A673 (cell line): ENCODE measurements at regions of chr7 and their contacts with region 1.

Region 1: DNA sequence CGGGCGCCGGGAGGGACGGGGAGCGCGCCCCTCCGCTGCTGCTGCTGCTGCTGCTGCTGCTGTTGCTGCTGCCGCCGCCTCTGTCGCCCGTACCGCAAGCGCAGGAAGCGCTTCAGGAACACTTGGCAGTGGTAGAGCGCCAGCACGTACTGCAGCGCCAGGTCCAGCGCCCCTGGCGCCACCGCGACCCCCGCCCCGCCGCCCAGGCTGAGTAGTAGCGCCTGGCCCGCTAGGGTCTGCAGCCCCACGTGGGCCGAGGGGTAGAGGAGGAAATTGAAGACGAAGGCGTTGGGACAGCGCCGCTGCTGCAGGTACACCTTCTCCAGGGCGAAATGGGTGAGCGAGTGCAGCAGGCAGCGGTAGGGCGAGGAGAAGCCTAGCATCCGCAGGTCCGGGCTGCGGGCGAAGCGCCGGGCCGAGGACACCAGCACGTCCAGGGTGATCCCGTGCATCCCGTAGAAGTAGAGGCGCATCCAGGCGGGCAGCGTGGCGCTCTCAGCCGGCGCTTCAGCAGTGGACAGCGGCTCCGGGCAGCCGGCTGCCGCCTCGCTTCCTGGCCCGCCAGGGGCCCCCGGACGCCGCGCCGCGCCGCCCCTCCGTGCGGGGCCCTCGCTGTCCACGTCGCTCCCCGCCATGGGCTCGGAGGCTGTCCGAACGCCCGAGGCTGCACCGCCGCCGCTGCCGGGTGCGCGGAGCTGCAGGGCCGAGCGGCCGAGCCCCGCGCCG is at the start of gene TMEM229A:
- DNase-seq: peak; percentile 78
- H3K4me3 ChIP-seq: peak within 1 kb of the TSS; percentile 77
- H3K27ac ChIP-seq: peak within 1 kb of the TSS; percentile 98
- H3K4me1 ChIP-seq: peaks cover 54% of the 10 kb centered on the region
- H3K27me3 ChIP-seq: no peaks in the 10 kb centered on the region
- CTCF ChIP-seq: 0 out of 2 replicates have a peak, but pooled peaks have one; percentile 25
- total RNA-seq, gene TMEM229A: 22.2 and 24.6 TPM in 2 replicates

Region 2: GRCh38 chr7:122975341-122975740 is 1057.2 kb before region 1 on chr7:
- CTCF ChIA-PET with region 1: no interaction called
- POLR2A ChIA-PET with region 1: no interaction called
- intact Hi-C with region 1: loop called (anchors 5 kb)
- DNase-seq: no peak
- H3K4me3 ChIP-seq: no peak overlapping the region
- H3K27ac ChIP-seq: peak overlapping the region; percentile 35
- H3K4me1 ChIP-seq: peaks cover 36% of the 10 kb centered on the region
- H3K27me3 ChIP-seq: no peaks in the 10 kb centered on the region
- CTCF ChIP-seq: no peak

Region 3: DNA sequence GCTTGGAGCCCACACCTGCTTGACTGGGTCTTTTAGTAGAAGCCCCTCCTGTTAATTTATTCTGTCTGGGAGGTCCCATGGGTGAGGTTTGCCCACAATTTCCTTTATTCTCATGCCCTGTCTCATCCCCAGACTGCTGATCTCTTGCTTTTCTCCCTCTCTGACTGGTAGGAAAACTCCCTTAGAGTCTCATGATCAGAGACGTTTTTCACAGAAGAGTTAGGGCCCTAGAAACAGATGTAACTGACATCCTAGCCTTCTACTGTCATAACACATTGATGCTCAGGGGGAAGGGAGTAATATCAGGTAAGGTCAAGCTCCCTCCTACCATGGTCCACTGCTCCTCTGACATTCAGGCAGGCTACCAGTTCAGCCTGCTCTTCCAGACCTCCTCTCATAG is 240.0 kb before region 1 on chr7:
- CTCF ChIA-PET with region 1: no interaction called
- POLR2A ChIA-PET with region 1: no interaction called
- intact Hi-C with region 1: no loop called
- DNase-seq: no peak
- H3K4me3 ChIP-seq: no peak overlapping the region
- H3K27ac ChIP-seq: no peak overlapping the region
- H3K4me1 ChIP-seq: no peaks in the 10 kb centered on the region
- H3K27me3 ChIP-seq: no peaks in the 10 kb centered on the region
- CTCF ChIP-seq: no peak

Region 4: DNA sequence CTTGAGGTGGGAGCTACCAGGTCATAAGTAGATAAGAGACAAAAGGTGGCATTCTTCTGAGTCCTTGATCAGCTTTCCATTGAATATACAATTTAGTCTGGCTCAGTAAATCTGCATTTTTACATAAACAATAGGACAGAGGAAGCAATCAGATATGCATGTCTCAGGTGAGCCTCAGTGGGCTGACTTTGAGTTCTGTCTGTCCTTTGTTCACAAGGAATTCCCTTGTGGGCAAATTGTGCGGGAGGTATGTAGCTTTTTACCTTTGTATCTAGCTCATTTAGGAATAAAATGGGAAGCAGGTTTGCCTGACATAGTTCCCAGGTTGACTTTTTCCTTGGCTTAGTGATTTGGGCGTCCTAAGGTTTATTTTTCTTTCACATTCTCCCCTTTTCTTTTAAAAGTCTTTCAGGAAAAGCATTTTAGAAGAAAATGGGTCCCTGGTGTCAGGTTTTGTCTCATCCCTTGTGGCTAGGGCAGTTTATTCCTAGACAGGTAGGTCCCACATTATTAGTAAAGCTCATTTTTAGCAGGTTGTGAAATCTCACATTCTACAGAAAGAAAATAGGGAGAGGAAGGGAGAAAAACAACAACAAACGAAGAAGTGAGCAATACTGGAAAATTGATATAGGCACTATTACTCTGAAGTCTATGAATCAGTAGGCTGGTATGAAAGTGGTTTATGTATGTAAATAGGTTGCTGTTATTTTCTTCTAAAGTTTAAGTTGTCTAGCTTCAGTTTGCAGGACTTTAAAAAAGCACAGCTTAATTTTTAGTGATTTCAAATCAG is 90.9 kb before region 1 on chr7:
- CTCF ChIA-PET with region 1: no interaction called
- POLR2A ChIA-PET with region 1: no interaction called
- intact Hi-C with region 1: no loop called
- DNase-seq: no peak
- H3K4me3 ChIP-seq: no peak overlapping the region
- H3K27ac ChIP-seq: no peak overlapping the region
- H3K4me1 ChIP-seq: peaks cover 26% of the 10 kb centered on the region
- H3K27me3 ChIP-seq: no peaks in the 10 kb centered on the region
- CTCF ChIP-seq: no peak

Region 5: DNA sequence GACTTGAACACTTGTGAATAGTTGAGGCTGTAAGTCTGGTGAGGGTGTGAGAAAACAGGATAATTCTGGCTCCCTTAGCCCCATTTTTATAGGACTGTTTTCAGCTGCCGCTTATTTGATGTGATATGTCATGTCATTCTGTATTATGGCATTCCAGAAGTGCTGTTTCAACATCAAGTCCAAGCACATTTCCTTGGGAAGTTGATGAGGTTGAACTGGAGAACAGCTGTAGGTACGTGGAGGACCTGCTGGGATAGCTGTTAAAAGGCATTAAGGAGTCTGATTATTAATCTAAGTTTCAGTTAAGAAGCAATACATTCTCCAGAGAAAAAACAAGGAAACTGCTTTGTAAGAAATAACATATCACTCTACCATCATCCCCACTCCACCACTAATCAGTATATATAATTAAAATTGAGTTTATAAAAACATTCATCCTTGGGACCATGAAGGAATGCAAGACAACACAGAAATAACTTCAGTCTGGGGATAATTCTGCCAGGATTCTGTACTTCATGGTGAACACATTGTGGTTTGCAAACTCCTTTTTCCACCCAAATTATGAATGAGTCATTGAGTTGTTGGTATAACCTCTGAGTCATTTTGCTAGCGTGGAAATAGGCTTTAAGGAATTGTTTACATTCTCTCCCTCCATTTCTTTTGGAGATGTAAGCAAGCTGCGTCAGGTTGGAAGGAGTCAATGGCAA is 40.2 kb after region 1 on chr7:
- CTCF ChIA-PET with region 1: no interaction called
- POLR2A ChIA-PET with region 1: no interaction called
- intact Hi-C with region 1: loop called (anchors 5 kb)
- DNase-seq: peak; percentile 80
- H3K4me3 ChIP-seq: no peak overlapping the region
- H3K27ac ChIP-seq: peak overlapping the region; percentile 46
- H3K4me1 ChIP-seq: peaks cover 40% of the 10 kb centered on the region
- H3K27me3 ChIP-seq: no peaks in the 10 kb centered on the region
- CTCF ChIP-seq: no peak

Region 6: DNA sequence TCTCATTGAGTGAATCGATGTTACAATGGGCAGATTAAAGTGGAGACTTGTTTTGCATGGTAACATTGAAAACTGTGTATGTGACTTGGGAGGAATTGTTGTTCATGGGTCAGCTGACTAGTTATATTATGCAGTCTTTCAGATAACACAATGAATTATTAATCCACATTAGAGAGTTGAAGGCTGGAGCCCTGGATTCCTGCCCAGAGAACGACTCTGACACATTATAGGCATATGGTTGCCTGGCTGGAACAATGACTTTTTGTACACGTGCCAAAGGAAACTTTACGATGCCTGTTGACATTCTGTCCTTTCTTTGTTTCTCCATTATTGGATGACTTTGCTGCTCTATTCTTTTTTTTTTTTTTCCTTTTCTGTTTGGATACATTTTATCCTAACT is 52.6 kb after region 1 on chr7:
- CTCF ChIA-PET with region 1: no interaction called
- POLR2A ChIA-PET with region 1: no interaction called
- intact Hi-C with region 1: loop called (anchors 2 kb)
- DNase-seq: peak; percentile 92
- H3K4me3 ChIP-seq: no peak overlapping the region
- H3K27ac ChIP-seq: peak overlapping the region; percentile 83
- H3K4me1 ChIP-seq: peaks cover 59% of the 10 kb centered on the region
- H3K27me3 ChIP-seq: no peaks in the 10 kb centered on the region
- CTCF ChIP-seq: no peak